CD4-positive, alpha-beta T cell (primary cell): ENCODE measurements at regions of chr1 and their contacts with region 1.

Region 1: GRCh38 chr1:109687616-109688499 is at the start of gene GSTM1:
- DNase-seq: peak in 9 of 14 experiments; percentile 59 to 87 (median 79)
- ATAC-seq: peak; percentile 99
- H3K4me3 ChIP-seq: peak within 1 kb of the TSS; percentile 67
- H3K4me3 Mint-ChIP-seq: peak within 1 kb of the TSS; percentile 95
- H3K27ac ChIP-seq: no peak within 1 kb of the TSS
- H3K27ac Mint-ChIP-seq: peak within 1 kb of the TSS; percentile 86
- H3K4me1 ChIP-seq: no peaks in the 10 kb centered on the region
- H3K4me1 Mint-ChIP-seq: peaks cover 23% of the 10 kb centered on the region
- H3K27me3 ChIP-seq: no peaks in the 10 kb centered on the region
- H3K27me3 Mint-ChIP-seq: no peaks in the 10 kb centered on the region
- CTCF ChIP-seq: peak; percentile 63
- total RNA-seq, gene GSTM1: 31.9 to 36.2 TPM

Region 2: DNA sequence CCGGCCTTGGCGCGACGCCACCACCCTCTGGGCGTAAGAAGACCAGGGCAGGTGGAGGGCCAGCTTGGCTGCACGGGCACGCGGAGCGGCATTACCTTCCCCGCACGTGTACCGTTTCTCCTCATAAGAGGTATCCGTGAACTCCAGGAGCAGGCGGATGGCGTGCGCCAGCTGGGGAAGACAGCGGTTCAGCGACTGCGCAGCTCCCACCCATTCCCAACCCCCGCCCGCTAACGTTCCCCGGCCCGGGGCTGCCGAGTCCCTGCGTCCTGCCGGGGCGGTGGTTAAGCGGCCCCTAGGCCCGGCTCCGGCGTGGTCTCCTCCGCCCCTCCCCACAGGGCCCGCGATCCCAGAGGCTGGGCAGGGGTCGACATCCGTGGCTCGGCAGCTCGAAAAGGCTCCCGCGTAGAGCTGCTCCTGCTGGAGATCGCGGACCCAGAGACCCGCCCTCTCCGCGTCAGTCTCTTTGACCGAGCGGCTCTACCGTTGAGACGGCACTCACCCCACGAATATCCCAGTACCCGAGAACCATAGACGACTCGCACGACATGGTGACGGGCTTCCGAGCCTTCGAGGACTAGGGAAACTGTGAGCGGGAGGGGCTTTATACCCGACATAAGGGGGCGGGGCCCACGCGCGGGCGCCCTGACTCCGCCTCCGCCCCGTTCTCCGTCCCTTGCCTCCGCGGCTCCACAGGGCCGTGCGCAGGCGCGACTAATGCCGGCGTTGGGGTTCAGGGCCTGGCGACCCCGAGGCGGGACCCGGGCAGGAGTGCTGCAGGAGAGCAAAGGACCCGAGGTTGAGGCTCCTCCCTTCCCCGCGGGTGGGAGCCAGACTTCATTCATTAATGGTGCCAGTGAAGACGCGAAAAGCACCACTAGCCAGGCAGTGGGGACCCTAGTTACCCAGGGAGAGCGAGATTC is 52.1 kb after region 1 on chr1:
- CTCF ChIA-PET with region 1: no interaction called
- POLR2A ChIA-PET with region 1: interaction called, 12 read pairs
- intact Hi-C with region 1: loop called in 1 of 2 experiments (anchors 5 kb)
- DNase-seq: peak; percentile 73 to 94 (median 82)
- ATAC-seq: peak; percentile 94
- H3K4me3 ChIP-seq: peak overlapping the region; percentile 71
- H3K4me3 Mint-ChIP-seq: peak overlapping the region; percentile 90
- H3K27ac ChIP-seq: peak overlapping the region in 1 of 2 donors; percentile 14
- H3K27ac Mint-ChIP-seq: peak overlapping the region; percentile 80
- H3K4me1 ChIP-seq: peaks cover 18% of the 10 kb centered on the region
- H3K4me1 Mint-ChIP-seq: peaks cover 15% of the 10 kb centered on the region
- H3K27me3 ChIP-seq: peaks cover 0 to 4% of the 10 kb centered on the region in 2 experiments
- H3K27me3 Mint-ChIP-seq: no peaks in the 10 kb centered on the region
- CTCF ChIP-seq: no peak

Region 3: DNA sequence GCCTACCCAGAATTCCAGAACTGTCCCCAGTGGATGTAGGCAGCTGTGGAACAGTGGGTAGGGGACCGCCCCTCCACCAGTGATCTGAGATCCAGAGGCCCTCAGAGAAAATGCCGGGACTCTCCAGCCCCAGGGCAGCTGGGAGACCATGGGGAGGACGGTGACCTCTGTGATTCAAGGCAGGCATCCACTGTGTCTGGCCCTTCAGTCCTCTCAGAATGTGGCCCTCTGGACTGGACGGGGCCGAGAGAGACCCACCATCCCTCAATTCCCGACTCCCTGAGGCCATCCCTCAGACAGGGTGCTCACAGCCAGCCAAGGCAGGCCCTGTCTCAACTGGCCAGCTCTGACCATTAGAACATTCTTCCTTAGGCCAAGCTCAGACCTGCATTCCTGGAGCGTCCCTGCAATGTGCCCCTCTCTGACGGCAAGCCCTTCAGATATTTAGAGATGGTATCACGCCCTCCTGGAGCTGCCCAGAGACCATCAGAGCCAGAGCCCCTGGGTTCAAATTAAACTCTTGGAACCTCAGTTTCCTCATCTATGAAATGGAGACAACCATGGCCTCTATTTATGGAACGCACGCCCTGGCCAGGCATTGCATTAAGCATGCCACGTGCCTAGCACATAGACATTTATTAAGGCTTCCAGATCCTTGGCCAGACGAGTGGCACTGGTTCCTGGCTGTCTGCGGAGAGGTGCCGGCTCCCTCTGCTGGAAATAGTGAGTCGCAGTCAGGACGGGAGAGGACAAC is 85.5 kb after region 1 on chr1:
- CTCF ChIA-PET with region 1: no interaction called
- POLR2A ChIA-PET with region 1: no interaction called
- intact Hi-C with region 1: loop called in 1 of 2 experiments (anchors 5 kb)
- DNase-seq: peak; percentile 50 to 87 (median 62)
- ATAC-seq: peak; percentile 88
- H3K4me3 ChIP-seq: no peak overlapping the region
- H3K4me3 Mint-ChIP-seq: no peak overlapping the region
- H3K27ac ChIP-seq: no peak overlapping the region
- H3K27ac Mint-ChIP-seq: no peak overlapping the region
- H3K4me1 ChIP-seq: peaks cover 21% of the 10 kb centered on the region
- H3K4me1 Mint-ChIP-seq: peaks cover 12% of the 10 kb centered on the region
- H3K27me3 ChIP-seq: no peaks in the 10 kb centered on the region
- H3K27me3 Mint-ChIP-seq: no peaks in the 10 kb centered on the region
- CTCF ChIP-seq: peak; percentile 66

Region 4: DNA sequence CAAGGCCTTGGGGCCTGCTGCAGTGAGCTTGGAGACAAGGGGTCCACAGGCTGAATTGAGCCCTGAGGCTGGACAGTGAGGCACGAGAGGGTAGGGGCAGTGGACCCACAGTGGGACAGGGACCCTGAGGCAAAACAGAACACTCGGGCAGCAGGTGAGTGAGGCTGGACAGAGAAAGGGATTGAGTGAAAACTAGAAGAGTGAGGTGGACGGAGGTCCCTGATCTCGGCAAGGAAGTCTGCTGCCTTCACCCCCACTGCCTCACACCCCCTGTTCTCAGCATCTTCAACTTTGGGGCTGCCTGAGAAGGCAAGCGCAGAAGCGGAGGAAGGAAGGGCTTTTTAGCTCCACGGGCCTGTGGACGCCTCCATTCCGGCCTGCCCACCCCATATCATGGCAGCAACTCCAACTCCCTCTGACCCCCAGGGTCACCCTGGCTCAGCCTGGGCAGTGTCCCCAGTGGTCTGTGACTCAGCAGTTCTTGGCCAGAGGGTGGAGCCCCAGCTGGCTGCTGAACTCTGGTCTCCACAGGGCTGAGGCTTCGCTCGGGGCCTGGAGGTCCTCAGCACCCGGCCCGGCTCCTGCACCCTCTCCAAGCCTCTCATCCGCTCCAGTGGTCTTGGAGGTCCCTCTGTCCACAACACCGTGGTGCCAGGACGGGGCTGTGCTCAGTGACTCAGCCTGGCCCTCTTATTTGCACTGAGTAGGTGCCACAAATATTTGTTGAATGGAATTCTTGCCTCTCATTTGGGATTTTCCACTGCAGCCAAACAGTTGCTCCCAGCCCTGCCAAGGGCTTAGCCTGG is 135.9 kb after region 1 on chr1:
- CTCF ChIA-PET with region 1: no interaction called
- POLR2A ChIA-PET with region 1: no interaction called
- intact Hi-C with region 1: no loop called
- DNase-seq: peak in 1 of 14 experiments; percentile 13
- ATAC-seq: no peak
- H3K4me3 ChIP-seq: no peak overlapping the region
- H3K4me3 Mint-ChIP-seq: no peak overlapping the region
- H3K27ac ChIP-seq: no peak overlapping the region
- H3K27ac Mint-ChIP-seq: no peak overlapping the region
- H3K4me1 ChIP-seq: peaks cover 11% of the 10 kb centered on the region
- H3K4me1 Mint-ChIP-seq: peaks cover 5% of the 10 kb centered on the region
- H3K27me3 ChIP-seq: no peaks in the 10 kb centered on the region
- H3K27me3 Mint-ChIP-seq: no peaks in the 10 kb centered on the region
- CTCF ChIP-seq: no peak